ENCODE measurements at regions of chr6 and their contacts with region 1.

Region 1: DNA sequence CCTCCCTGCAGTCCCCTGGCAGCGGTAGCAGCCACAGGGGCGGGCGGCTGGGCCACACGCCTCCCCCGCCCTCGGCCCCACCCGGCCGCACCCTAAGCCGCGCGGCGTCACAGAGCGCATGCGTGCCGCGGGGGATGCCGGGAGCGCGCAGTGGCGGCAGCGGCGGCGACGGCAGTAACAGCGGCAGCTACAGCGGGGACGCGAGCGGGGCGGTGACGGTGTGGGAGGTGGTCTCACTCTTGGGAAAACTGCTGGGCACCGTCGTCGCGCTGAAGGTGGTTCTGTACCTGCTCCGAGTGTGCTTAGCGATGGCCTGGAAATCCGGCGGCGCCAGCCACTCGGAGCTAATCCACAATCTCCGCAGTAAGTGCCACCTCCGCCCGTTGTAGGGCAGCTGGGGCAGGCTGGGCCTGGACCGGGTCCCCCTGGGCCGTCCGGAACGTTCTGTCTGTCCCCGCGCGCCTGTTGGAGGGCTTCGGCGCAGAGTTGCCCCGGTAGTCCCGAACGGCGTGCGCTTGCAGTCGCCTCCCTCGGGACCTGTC is at the start of gene PCMT1:
- DNase-seq: peak; percentile 67
- H3K4me3 ChIP-seq: peak within 1 kb of the TSS; percentile 97
- CTCF ChIP-seq: no peak

Region 2: DNA sequence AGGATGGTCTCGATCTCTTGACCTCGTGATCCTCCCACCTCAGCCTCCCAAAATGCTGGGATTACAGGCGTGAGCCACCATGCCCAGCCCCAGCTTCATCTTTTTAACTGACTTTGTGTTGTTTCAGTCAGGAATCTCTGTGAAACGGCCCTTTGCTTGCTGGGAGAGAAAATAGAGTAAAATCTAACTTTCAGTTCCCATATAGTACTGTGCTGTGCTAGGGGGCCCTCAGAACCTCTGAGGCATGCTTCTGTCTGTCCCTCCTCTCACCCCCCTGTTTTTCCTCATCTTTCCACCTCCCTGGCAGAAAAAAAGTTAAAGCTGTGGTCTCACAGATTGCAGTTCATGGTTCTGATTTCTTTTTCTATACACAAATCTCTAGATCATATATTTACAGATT is 66.1 kb after region 1 on chr6:
- in situ Hi-C with region 1: loop called (anchors 10 kb)
- DNase-seq: no peak
- H3K4me3 ChIP-seq: no peak overlapping the region
- CTCF ChIP-seq: no peak

Measured in astrocyte of the cerebellum (primary cell).